ENCODE measurements at regions of chr16 and their contacts with region 1.

Region 1: GRCh38 chr16:11586856-11587642 is at the start of gene LITAF:
- DNase-seq: peak; percentile 75
- ATAC-seq: peak; percentile 78
- H3K4me3 Mint-ChIP-seq: peak within 1 kb of the TSS; percentile 89
- H3K27ac Mint-ChIP-seq: peak within 1 kb of the TSS; percentile 90
- H3K4me1 Mint-ChIP-seq: peaks cover 41% of the 10 kb centered on the region
- H3K27me3 Mint-ChIP-seq: peaks cover 3% of the 10 kb centered on the region
- total RNA-seq, gene LITAF: 91.4 to 155 TPM

Region 2: DNA sequence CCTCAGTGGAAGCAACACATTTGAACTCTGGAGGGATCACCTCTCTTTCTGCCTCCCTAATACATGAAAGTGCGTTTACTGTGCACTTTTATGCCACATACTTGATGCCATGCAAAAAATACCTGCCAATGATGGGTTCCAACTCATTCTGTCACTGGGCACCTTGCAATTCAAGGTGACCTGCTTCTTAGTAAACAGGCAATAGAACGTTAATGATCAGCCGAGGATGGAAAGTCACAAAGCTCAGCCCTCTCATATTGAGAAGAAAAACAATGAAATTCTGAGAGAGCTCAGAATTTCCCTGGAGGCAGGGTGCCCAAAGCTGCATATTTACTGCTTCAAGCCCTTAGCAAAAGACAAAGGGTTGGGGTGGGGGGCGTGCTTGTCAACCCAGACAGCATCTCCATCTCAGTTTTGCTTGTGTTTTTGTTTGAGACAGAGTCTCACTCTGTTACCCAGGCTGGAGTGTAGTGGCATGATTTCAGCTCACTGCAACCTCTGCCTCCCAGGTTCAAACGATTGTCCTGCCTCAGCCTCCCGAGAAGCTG is 23.5 kb before region 1 on chr16:
- CTCF ChIA-PET with region 1: interaction called, 10 read pairs
- DNase-seq: no peak
- ATAC-seq: no peak
- H3K4me3 Mint-ChIP-seq: peak overlapping the region; percentile 18
- H3K27ac Mint-ChIP-seq: peak overlapping the region; percentile 74
- H3K4me1 Mint-ChIP-seq: peaks cover 47% of the 10 kb centered on the region
- H3K27me3 Mint-ChIP-seq: no peaks in the 10 kb centered on the region

Region 3: GRCh38 chr16:11639925-11640899 is 53.2 kb after region 1 on chr16:
- CTCF ChIA-PET with region 1: interaction called, 22 read pairs
- DNase-seq: no peak
- ATAC-seq: no peak
- H3K4me3 Mint-ChIP-seq: no peak overlapping the region
- H3K27ac Mint-ChIP-seq: no peak overlapping the region
- H3K4me1 Mint-ChIP-seq: peaks cover 2% of the 10 kb centered on the region
- H3K27me3 Mint-ChIP-seq: peaks cover 4% of the 10 kb centered on the region

Region 4: GRCh38 chr16:11689031-11689761 is 102.1 kb after region 1 on chr16:
- CTCF ChIA-PET with region 1: no interaction called
- DNase-seq: no peak
- ATAC-seq: no peak
- H3K4me3 Mint-ChIP-seq: no peak overlapping the region
- H3K27ac Mint-ChIP-seq: no peak overlapping the region
- H3K4me1 Mint-ChIP-seq: peaks cover 15% of the 10 kb centered on the region
- H3K27me3 Mint-ChIP-seq: no peaks in the 10 kb centered on the region

Region 5: DNA sequence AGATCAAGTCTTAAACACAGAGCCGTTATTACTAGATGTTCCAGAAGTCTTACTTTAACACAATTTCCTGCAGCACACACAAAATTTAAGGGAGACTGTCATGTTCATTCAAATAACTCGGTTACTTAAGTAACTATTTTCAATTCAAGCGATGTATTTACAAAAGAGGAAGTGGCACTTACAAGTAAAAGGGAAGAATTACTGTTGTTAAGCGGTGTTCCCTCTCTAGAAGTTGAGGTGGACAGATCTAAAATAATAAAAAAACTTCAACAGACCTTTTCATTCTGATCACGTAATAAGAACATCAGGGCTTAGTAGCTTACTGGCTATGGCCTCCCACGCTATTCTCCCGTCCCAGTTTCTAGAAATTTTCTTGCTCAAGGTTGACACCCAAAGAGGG is 181.8 kb after region 1 on chr16:
- CTCF ChIA-PET with region 1: no interaction called
- DNase-seq: no peak
- ATAC-seq: no peak
- H3K4me3 Mint-ChIP-seq: no peak overlapping the region
- H3K27ac Mint-ChIP-seq: no peak overlapping the region
- H3K4me1 Mint-ChIP-seq: peaks cover 9% of the 10 kb centered on the region
- H3K27me3 Mint-ChIP-seq: no peaks in the 10 kb centered on the region

Region 6: GRCh38 chr16:12289175-12290063 is 702.4 kb after region 1 on chr16:
- CTCF ChIA-PET with region 1: no interaction called
- DNase-seq: no peak
- ATAC-seq: no peak
- H3K4me3 Mint-ChIP-seq: no peak overlapping the region
- H3K27ac Mint-ChIP-seq: no peak overlapping the region
- H3K4me1 Mint-ChIP-seq: no peaks in the 10 kb centered on the region
- H3K27me3 Mint-ChIP-seq: no peaks in the 10 kb centered on the region

Measured in activated CD8-positive, alpha-beta memory T cell treated with anti-CD3 and anti-CD28 coated beads, Interleukin-2, amount 10 ng/mL, durations not matched to agents 7 days and 5 days (primary cell).